CD14-positive monocyte (primary cell): ENCODE measurements at regions of chr10 and their contacts with region 1.

Region 1: GRCh38 chr10:11209830-11210181 is 192.1 kb downstream of the CELF2 start:
- DNase-seq: no peak
- H3K4me3 ChIP-seq: peak overlapping the region in 1 of 3 experiments; percentile 11
- H3K4me3 Mint-ChIP-seq: peak overlapping the region in 1 of 2 donors; percentile 30
- H3K27ac ChIP-seq: peak overlapping the region in 1 of 2 donors; percentile 65
- H3K27ac Mint-ChIP-seq: peak overlapping the region; percentile 26 to 93 (median 83)
- H3K4me1 ChIP-seq: peaks cover 48 to 58% of the 10 kb centered on the region in 2 donors
- H3K4me1 Mint-ChIP-seq: peaks cover 90% of the 10 kb centered on the region
- H3K27me3 ChIP-seq: no peaks in the 10 kb centered on the region
- H3K27me3 Mint-ChIP-seq: no peaks in the 10 kb centered on the region
- CTCF ChIP-seq: no peak

Region 2: GRCh38 chr10:11170993-11171851 is 38.6 kb before region 1 on chr10:
- intact Hi-C with region 1: loop called in 1 of 2 experiments (anchors 5 kb)
- DNase-seq: peak; percentile 66 to 93 (median 78)
- H3K4me3 ChIP-seq: peak overlapping the region; percentile 90 to 96 (median 94)
- H3K4me3 Mint-ChIP-seq: no peak overlapping the region
- H3K27ac ChIP-seq: peak overlapping the region; percentile 67 to 91
- H3K27ac Mint-ChIP-seq: no peak overlapping the region
- H3K4me1 ChIP-seq: peaks cover 88 to 97% of the 10 kb centered on the region in 2 donors
- H3K4me1 Mint-ChIP-seq: peaks cover 3% of the 10 kb centered on the region
- H3K27me3 ChIP-seq: no peaks in the 10 kb centered on the region
- H3K27me3 Mint-ChIP-seq: no peaks in the 10 kb centered on the region
- CTCF ChIP-seq: no peak

Region 3: GRCh38 chr10:11465406-11465805 is 255.6 kb after region 1 on chr10:
- intact Hi-C with region 1: no loop called
- DNase-seq: no peak
- H3K4me3 ChIP-seq: no peak overlapping the region
- H3K4me3 Mint-ChIP-seq: no peak overlapping the region
- H3K27ac ChIP-seq: no peak overlapping the region
- H3K27ac Mint-ChIP-seq: no peak overlapping the region
- H3K4me1 ChIP-seq: no peaks in the 10 kb centered on the region
- H3K4me1 Mint-ChIP-seq: no peaks in the 10 kb centered on the region
- H3K27me3 ChIP-seq: no peaks in the 10 kb centered on the region
- H3K27me3 Mint-ChIP-seq: no peaks in the 10 kb centered on the region
- CTCF ChIP-seq: no peak